ENCODE measurements at regions of chr4 and their contacts with region 1.

Region 1: DNA sequence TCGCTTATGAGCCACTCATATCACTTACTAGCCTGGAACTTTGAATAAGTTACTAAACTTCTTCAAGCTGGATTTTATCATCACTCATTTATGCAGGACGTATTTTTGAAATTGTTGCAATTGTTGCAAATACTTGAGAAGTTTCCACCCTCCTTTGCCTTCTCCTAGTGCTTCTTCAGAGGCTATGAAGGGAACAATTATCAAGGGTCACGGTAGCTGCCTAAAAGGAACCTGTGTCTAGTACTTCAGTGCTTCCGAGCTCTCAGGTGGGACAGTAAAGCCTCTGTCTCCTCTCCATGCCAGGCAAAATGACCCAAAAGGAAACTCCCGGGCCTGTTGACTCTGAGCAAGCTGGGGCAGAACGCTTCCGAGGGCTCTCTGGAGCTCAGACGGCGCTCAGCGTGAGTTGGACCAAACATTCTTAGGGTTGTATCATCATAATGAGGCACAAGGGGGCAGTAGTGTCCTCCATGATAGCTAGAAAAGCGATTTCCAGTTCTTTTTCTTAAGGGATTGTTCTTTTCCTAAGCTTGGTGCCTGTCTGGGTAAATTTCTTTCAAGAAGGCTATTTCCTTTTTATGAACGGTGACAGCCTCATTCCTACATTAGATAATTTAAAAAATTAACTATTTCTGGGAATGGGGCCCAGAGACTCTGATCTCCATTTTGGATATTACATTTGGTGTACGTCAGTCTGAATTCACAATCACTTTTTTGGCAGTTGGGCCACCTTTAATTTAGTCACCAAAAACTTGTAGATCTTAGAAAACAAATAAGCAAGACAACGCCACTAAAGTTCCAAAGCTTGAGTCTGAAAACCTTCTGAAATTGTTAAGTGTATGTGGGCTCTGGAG is 73.1 kb downstream of the PACRGL start:
- DNase-seq: peak; percentile 81
- H3K4me3 ChIP-seq: no peak overlapping the region
- H3K27ac ChIP-seq: peak overlapping the region; percentile 1
- H3K4me1 ChIP-seq: peaks cover 15% of the 10 kb centered on the region
- H3K27me3 ChIP-seq: no peaks in the 10 kb centered on the region
- CTCF ChIP-seq: peak; percentile 63 to 72
- POLR2A ChIP-seq: no peak

Region 2: GRCh38 chr4:20938204-20938603 is 164.8 kb after region 1 on chr4:
- CTCF ChIA-PET with region 1: interaction called, 11 read pairs
- POLR2A ChIA-PET with region 1: no interaction called
- dilution Hi-C with region 1: no loop called
- intact Hi-C with region 1: loop called (anchors 10 kb)
- DNase-seq: no peak
- H3K4me3 ChIP-seq: no peak overlapping the region
- H3K27ac ChIP-seq: no peak overlapping the region
- H3K4me1 ChIP-seq: no peaks in the 10 kb centered on the region
- H3K27me3 ChIP-seq: no peaks in the 10 kb centered on the region
- CTCF ChIP-seq: no peak
- POLR2A ChIP-seq: no peak

Region 3: DNA sequence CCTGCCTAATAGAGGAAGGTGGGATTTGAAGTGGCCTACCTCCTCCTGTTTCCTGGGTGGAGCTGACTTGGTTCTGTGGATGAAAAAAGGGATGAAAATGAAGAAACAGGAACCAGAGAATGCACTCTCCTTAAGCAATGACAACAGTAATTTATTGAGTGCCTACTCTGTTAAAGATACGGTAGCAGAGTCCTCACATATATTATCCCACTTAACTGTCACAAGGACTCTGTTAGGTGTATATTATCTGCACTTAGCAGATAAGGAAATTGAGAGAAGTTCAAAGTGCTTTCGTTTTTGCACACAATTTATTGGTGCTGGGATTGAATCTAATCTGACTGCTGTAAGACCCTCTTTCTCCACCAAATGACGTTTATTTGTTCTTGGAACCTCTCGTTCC is 228.1 kb after region 1 on chr4:
- CTCF ChIA-PET with region 1: interaction called, 12 read pairs
- POLR2A ChIA-PET with region 1: no interaction called
- dilution Hi-C with region 1: no loop called
- intact Hi-C with region 1: no loop called
- DNase-seq: no peak
- H3K4me3 ChIP-seq: no peak overlapping the region
- H3K27ac ChIP-seq: no peak overlapping the region
- H3K4me1 ChIP-seq: no peaks in the 10 kb centered on the region
- H3K27me3 ChIP-seq: no peaks in the 10 kb centered on the region
- CTCF ChIP-seq: no peak
- POLR2A ChIP-seq: no peak

Region 4: GRCh38 chr4:21134994-21135393 is 361.6 kb after region 1 on chr4:
- CTCF ChIA-PET with region 1: interaction called, 133 read pairs
- POLR2A ChIA-PET with region 1: no interaction called
- dilution Hi-C with region 1: no loop called
- intact Hi-C with region 1: loop called (anchors 1 kb)
- DNase-seq: peak; percentile 62
- H3K4me3 ChIP-seq: no peak overlapping the region
- H3K27ac ChIP-seq: no peak overlapping the region
- H3K4me1 ChIP-seq: peaks cover 18% of the 10 kb centered on the region
- H3K27me3 ChIP-seq: no peaks in the 10 kb centered on the region
- CTCF ChIP-seq: peak; percentile 29 to 30
- POLR2A ChIP-seq: no peak

Region 5: GRCh38 chr4:21205821-21206531 is 432.6 kb after region 1 on chr4:
- CTCF ChIA-PET with region 1: interaction called, 10 read pairs
- POLR2A ChIA-PET with region 1: no interaction called
- dilution Hi-C with region 1: no loop called
- intact Hi-C with region 1: loop called (anchors 5 kb)
- DNase-seq: peak; percentile 63
- H3K4me3 ChIP-seq: no peak overlapping the region
- H3K27ac ChIP-seq: no peak overlapping the region
- H3K4me1 ChIP-seq: peaks cover 14% of the 10 kb centered on the region
- H3K27me3 ChIP-seq: no peaks in the 10 kb centered on the region
- CTCF ChIP-seq: no peak
- POLR2A ChIP-seq: no peak

Region 6: GRCh38 chr4:21765810-21766407 is 992.5 kb after region 1 on chr4:
- CTCF ChIA-PET with region 1: interaction called, 20 read pairs
- POLR2A ChIA-PET with region 1: no interaction called
- dilution Hi-C with region 1: no loop called
- intact Hi-C with region 1: loop called (anchors 1 kb)
- DNase-seq: peak; percentile 75
- H3K4me3 ChIP-seq: no peak overlapping the region
- H3K27ac ChIP-seq: no peak overlapping the region
- H3K4me1 ChIP-seq: peaks cover 12% of the 10 kb centered on the region
- H3K27me3 ChIP-seq: peaks cover 33 to 50% of the 10 kb centered on the region in 2 experiments
- CTCF ChIP-seq: peak; percentile 74 to 78
- POLR2A ChIP-seq: no peak